Dendritic cell treated with granulocyte-macrophage colony-stimulating factor and Interleukin-4, amounts not matched to agents 40 ng/mL and 50 ng/mL, for 4 days (primary cell): ENCODE measurements at regions of chr12 and their contacts with region 1.

Region 1: GRCh38 chr12:8123124-8123912 is at the start of gene CLEC4A:
- H3K4me3 Mint-ChIP-seq: peak within 1 kb of the TSS; percentile 94
- H3K27ac Mint-ChIP-seq: peak within 1 kb of the TSS; percentile 100
- H3K4me1 Mint-ChIP-seq: peaks cover 52% of the 10 kb centered on the region
- H3K27me3 Mint-ChIP-seq: no peaks in the 10 kb centered on the region

Region 2: GRCh38 chr12:8143261-8143660 is 19.9 kb after region 1 on chr12:
- intact Hi-C with region 1: no loop called
- H3K4me3 Mint-ChIP-seq: no peak overlapping the region
- H3K27ac Mint-ChIP-seq: peak overlapping the region; percentile 73
- H3K4me1 Mint-ChIP-seq: peaks cover 50% of the 10 kb centered on the region
- H3K27me3 Mint-ChIP-seq: no peaks in the 10 kb centered on the region

Region 3: DNA sequence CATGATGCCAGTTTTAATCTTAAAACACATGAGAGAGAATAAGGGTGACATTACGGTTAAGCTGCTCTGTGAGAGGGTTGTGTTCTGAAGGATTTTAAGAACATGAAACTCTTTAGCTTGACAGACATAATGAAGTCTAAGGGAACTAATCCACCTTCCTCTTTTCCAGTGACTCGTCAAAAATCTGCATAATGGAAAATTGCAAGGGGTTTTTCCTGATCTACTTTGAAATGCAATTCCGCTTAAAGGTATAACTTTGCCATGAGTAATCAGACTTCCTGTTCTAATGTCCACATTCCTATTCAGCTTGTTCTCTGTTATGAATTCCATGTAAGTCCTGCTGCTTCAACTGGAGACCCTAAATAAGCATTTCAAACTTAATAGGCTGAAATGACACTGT is 33.5 kb after region 1 on chr12 and contains the start of gene ZNF705A:
- intact Hi-C with region 1: loop called (anchors 5 kb)
- H3K4me3 Mint-ChIP-seq: peak within 1 kb of the TSS; percentile 55
- H3K27ac Mint-ChIP-seq: peak within 1 kb of the TSS; percentile 98
- H3K4me1 Mint-ChIP-seq: peaks cover 94% of the 10 kb centered on the region
- H3K27me3 Mint-ChIP-seq: no peaks in the 10 kb centered on the region